PC-9 (cell line): ENCODE measurements at regions of chr11 and their contacts with region 1.

Region 1: GRCh38 chr11:88384673-88385005 is 47.1 kb upstream of the CTSC start:
- DNase-seq: peak; percentile 36 to 85
- H3K4me3 ChIP-seq: peak overlapping the region; percentile 37; the same call in 1 of the 2 replicates
- H3K27ac ChIP-seq: peak overlapping the region; percentile 44
- H3K4me1 ChIP-seq: peaks cover 52% of the 10 kb centered on the region
- H3K27me3 ChIP-seq: no peaks in the 10 kb centered on the region
- CTCF ChIP-seq: no peak

Region 2: DNA sequence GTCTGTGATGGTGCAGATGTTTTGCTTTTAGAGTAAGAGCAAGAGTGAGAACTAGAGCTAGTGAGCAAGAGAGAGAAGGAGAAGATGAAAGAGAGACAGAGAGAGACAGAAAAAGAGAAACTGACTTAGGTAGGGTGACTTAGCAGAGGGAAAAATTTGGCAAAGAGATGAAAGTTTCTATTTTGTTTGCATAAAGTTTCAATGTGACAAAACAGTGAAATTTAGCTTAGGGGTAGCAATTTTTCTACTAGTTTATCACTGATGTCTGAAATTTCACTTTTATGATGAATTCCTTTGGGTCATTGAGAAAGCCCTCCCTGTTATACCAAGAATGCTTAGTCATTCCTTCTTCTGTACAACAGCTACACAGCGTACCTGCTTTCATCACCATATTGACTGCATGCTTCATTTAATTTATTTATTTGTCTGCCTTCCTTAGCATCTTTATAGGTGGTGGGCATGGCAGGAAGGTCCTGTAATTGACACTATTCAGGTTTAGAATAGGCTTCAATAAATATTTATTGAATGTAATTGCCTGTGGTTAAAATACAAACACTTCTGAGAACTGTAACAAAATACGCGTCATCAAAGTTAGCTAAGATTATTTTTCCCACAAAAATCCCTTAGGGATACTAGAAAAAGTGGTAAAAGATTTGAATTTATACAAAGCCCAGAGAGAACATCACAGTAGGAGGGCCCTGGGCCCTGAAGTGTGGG is 27.2 kb before region 1 on chr11:
- CTCF ChIA-PET with region 1: no interaction called
- POLR2A ChIA-PET with region 1: no interaction called
- intact Hi-C with region 1: no loop called
- DNase-seq: peak in 1 of 2 experiments; percentile 92
- H3K4me3 ChIP-seq: peak overlapping the region; percentile 1; the same call in 1 of the 2 replicates
- H3K27ac ChIP-seq: peak overlapping the region; percentile 91
- H3K4me1 ChIP-seq: peaks cover 23% of the 10 kb centered on the region
- H3K27me3 ChIP-seq: no peaks in the 10 kb centered on the region
- CTCF ChIP-seq: no peak

Region 3: DNA sequence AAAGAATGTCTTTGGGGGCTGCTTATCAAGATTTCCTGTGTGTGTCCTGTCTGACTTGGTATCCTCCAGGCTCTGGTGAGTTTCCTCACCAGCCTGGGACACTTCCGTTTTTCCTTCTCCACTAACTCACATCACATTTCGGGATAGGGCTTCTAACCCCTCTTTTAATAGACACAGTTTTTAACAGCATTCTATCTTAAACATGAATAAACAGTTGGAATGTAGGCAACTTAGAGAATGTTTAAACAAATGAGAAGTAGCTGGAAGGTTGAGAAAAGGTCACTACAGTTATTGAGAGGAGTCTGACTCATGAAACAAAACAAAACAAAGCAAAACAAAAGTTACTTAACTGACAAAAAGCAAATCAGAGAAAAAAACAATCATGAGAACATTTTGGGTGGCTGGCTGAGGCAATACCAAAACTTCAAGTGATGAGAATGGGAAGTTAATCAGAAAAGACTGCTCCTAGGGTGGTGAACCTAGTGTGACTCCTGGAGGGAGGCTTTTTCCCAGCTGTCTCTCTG is 17.6 kb after region 1 on chr11:
- CTCF ChIA-PET with region 1: no interaction called
- POLR2A ChIA-PET with region 1: no interaction called
- intact Hi-C with region 1: loop called (anchors 2 kb)
- DNase-seq: peak in 1 of 2 experiments; percentile 98
- H3K4me3 ChIP-seq: no peak overlapping the region
- H3K27ac ChIP-seq: peak overlapping the region; percentile 85
- H3K4me1 ChIP-seq: peaks cover 55% of the 10 kb centered on the region
- H3K27me3 ChIP-seq: no peaks in the 10 kb centered on the region
- CTCF ChIP-seq: no peak

Region 4: GRCh38 chr11:88421530-88421929 is 36.9 kb after region 1 on chr11:
- CTCF ChIA-PET with region 1: no interaction called
- POLR2A ChIA-PET with region 1: no interaction called
- intact Hi-C with region 1: loop called (anchors 2 kb)
- DNase-seq: peak; percentile 10 to 64
- H3K4me3 ChIP-seq: no peak overlapping the region
- H3K27ac ChIP-seq: peak overlapping the region; percentile 10; the same call in 1 of the 2 replicates
- H3K4me1 ChIP-seq: peaks cover 45% of the 10 kb centered on the region
- H3K27me3 ChIP-seq: no peaks in the 10 kb centered on the region
- CTCF ChIP-seq: no peak